ENCODE measurements at regions of chr22 and their contacts with region 1.

Region 1: DNA sequence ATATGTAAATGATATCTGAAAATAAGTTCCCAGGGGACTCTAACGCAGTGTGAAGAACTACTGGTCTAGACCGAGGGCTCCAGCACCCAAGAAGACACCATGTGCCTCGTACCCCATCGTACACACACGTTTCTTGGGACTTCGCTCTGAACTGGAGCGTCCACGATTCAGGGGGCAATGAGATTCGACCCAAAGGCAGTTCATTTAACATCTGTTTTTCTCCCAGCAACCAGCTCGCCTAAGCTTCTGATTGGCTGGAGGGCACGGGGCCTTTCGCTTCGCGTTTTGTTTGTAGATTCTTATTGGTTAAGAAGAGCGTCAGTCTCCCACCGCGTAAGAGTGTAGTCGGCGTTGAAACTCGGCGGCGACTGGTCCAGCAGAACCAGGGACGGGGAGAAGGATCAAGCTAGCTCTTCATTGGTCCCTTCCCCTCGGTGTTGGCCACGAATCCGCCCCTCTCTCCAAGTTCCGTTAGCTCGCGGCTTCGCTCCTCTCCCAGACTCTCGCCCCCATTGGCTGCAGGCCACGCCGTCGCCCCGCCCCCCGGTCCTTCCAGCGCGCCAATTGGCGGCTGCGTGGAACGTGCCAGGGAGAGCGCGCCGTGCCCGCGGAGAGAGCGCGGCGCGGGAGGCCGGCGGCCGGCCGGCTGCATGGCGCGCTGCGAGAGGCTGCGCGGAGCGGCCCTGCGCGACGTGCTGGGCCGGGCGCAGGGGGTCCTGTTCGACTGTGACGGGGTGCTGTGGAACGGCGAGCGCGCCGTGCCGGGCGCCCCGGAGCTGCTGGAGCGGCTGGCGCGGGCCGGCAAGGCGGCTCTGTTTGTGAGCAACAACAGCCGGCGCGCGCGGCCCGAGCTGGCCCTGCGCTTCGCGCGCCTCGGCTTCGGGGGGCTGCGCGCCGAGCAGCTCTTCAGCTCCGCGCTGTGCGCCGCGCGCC is at the start of gene PDXP:
- DNase-seq: peak; percentile 97 to 99
- ATAC-seq: peak; percentile 97 to 99
- H3K4me3 ChIP-seq: peak within 1 kb of the TSS; percentile 82
- H3K27ac ChIP-seq: peak within 1 kb of the TSS; percentile 77 to 92
- H3K4me1 ChIP-seq: peaks cover 15% of the 10 kb centered on the region
- CTCF ChIP-seq: no peak
- EP300 ChIP-seq: no peak
- POLR2A ChIP-seq: peak; percentile 64
- RAD21 ChIP-seq: no peak
- polyA plus RNA-seq, gene PDXP: 13.1 and 17.9 TPM in 2 replicates

Region 2: DNA sequence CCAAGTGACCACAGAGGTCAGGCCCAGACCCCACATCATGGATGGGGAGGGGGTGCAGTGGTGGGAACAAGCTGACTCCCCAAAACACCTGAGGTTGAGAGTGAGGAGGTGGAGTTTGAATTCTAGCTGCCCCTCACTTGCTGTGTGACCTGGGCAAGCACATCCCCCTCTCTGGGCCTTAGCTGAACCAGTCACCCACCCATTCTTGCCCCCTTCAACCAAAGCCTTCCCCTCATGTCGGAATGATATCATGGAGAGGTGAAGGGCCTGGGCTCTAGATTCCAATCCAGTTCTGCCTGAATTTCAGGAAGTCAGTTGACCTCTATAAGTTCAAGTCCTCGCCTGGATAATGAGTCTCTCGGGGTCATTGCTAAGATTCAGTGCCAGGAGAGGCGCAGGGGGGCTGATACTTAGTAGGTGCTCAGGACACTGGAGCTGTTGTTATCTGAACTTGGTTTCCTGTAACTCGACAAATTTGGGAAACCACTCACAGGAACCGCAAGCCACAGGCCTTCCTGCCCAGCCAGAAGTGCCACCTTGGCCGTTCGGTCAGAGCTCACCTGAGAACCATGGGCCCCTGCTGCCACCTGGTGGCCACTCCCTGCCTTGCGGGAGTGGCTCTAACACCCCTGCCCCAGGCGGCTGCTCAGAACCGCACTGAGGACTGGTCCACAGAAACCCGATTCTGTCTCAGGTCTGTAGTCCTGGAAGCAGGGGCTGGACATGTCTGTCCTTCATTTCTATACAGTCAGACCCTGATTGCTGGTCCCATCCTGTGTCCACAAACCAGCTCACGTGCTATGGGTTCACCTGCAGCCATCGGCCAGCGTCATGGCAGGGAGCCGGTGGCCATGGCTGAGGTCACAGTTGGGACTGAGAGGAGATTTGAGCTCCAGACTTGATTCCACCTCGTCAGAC is 91.2 kb before region 1 on chr22:
- CTCF ChIA-PET with region 1: no interaction called
- POLR2A ChIA-PET with region 1: no interaction called
- DNase-seq: peak; percentile 63 to 68
- ATAC-seq: peak; percentile 38 to 71; a peak in 5 of 6 replicates
- H3K4me3 ChIP-seq: no peak overlapping the region
- H3K27ac ChIP-seq: 0 out of 6 replicates have a peak overlapping the region, but pooled peaks of 1 of the 2 experiments have one; percentile 11
- H3K4me1 ChIP-seq: peaks cover 63% of the 10 kb centered on the region
- CTCF ChIP-seq: peak; percentile 74
- EP300 ChIP-seq: no peak
- POLR2A ChIP-seq: no peak
- RAD21 ChIP-seq: peak; percentile 83

Region 3: DNA sequence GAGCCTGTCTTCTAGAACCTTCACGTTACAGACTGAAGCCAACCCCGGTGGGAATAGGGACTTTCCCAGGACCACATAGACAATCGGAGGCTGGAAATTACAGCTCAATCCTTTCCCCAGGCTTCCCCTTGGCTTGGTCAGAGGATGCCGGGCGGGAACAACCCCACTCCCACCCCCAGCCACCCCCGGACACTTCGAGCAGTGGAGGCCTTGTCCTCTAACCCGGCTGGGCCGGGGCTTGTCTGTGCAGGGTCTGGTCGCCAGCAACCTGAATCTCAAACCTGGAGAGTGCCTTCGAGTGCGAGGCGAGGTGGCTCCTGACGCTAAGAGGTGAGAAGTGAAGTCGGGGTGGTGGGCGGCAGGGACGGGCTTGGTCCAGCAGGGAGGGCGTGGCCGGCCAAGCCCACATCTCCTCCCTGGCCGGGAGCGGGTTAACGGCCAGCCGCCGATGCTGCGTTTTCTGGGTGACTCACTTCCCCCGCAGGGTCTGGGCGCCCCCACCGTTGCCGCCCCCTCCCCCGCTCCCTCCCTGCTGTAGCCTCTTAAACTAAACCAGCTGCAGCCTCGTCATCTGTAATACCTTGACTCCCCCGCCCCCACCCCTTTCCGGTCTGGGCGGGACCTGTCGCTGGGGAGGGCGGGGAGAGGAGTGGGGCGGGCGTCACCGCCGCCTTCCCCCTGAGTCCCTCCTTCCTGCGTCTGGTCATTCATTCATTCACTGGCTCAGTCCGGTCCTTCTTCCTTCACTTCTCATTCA is 18.5 kb after region 1 on chr22:
- CTCF ChIA-PET with region 1: interaction called, 24 read pairs
- POLR2A ChIA-PET with region 1: interaction called, 31 read pairs
- DNase-seq: peak in 1 of 2 experiments; percentile 83
- ATAC-seq: peak; percentile 47 to 51
- H3K4me3 ChIP-seq: peak overlapping the region; percentile 64
- H3K27ac ChIP-seq: peak overlapping the region; percentile 93 to 97
- H3K4me1 ChIP-seq: peaks cover 33% of the 10 kb centered on the region
- CTCF ChIP-seq: no peak
- EP300 ChIP-seq: no peak
- POLR2A ChIP-seq: peak; percentile 29; the same call in 1 of the 2 replicates
- RAD21 ChIP-seq: no peak

Measured in A549 (cell line).